WTC11 (cell line): ENCODE measurements at regions of chr10 and their contacts with region 1.

Region 1: GRCh38 chr10:95841661-95842498 is 65.9 kb upstream of the CC2D2B start:
- DNase-seq: peak; percentile 23
- ATAC-seq: peak; percentile 51; the same call in 1 of the 2 replicates
- H3K4me3 Mint-ChIP-seq: no peak overlapping the region
- H3K27ac Mint-ChIP-seq: no peak overlapping the region
- H3K4me1 Mint-ChIP-seq: peaks cover 8% of the 10 kb centered on the region
- H3K27me3 Mint-ChIP-seq: no peaks in the 10 kb centered on the region
- CTCF ChIP-seq: peak; percentile 68

Region 2: DNA sequence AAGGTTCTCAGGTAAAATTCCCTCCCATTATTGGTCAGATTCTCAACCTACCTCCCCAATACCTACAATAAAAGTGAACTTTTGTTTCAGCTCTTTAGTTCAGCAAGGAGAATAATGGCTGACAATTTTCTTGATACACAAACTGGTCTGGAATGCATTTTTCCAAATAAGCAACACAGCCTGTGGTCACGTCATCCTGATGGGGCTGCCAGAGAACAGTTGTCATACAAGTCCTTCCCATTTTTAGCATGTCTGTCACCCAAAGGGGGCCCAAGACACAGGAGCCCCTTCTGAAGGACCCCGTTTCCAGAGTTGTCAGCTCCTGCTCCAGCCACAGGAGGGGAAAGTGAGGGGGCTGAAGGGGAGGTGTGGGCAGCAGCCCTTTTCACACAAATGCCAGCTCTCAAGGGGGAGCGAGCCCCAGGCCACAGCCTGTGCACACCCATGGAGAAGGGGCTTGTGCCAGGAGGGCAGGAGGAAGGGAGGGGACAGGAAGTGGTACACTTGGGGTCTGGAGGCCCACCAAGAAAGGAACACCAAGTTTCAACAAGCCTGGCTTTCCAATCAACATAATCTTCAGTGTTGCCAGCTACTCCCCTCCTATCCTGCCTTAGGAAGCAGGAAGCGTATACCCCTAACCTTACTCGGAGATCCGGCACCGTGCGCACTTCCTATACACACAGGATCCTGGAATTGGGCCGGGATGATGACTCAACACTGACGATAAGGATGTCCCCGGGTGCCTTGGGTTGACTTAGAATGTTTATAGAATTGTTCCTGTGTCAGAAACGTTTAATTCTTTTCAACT is 507.7 kb before region 1 on chr10:
- CTCF ChIA-PET with region 1: no interaction called
- POLR2A ChIA-PET with region 1: no interaction called
- DNase-seq: no peak
- ATAC-seq: no peak
- H3K4me3 Mint-ChIP-seq: no peak overlapping the region
- H3K27ac Mint-ChIP-seq: no peak overlapping the region
- H3K4me1 Mint-ChIP-seq: peaks cover 20% of the 10 kb centered on the region
- H3K27me3 Mint-ChIP-seq: no peaks in the 10 kb centered on the region
- CTCF ChIP-seq: no peak

Region 3: DNA sequence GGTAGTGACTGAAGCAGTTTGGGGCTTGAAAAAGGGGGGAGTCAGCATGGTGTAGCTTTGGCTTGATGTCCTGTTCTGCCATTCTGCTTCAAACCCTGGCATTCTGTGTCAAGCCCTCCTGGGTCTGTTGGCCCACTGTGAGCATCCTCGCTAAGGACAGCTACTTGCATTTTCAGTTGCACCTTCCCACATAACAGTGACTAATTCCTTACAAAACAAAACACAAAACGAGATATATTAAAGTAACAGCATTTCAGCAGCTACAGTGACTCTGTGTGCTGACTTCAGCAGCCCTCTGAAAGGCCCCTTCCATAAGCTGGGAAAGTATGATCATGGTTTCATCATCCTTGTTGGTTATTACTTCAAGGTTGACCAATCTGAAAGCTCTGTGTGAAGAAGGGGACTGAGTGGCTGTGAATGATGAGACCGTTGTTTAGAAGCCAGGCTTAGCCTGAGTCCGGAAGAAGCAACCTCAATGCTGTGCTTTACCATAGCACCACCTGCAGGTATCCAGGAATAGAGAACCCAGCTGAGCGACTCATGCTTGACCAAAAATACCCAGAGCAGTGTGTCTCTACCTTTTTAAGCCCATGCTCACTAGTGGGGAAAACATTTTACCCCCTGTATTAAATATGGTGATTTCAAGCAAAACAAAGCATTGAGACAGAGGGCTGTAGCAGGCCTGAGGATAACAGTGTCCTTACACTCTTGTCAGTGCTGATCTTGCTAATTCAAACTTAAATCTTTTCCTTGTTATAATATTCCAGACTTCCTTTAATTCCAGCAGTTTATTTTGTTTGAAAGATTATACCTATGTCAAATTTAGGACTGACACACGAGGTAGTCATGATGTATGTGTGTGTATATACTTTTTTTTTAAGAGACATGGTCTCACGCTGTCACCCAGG is 23.3 kb after region 1 on chr10:
- CTCF ChIA-PET with region 1: interaction called, 16 read pairs
- POLR2A ChIA-PET with region 1: no interaction called
- DNase-seq: peak; percentile 36
- ATAC-seq: peak; percentile 99
- H3K4me3 Mint-ChIP-seq: no peak overlapping the region
- H3K27ac Mint-ChIP-seq: peak overlapping the region; percentile 9; the same call in 1 of the 2 replicates
- H3K4me1 Mint-ChIP-seq: no peaks in the 10 kb centered on the region
- H3K27me3 Mint-ChIP-seq: no peaks in the 10 kb centered on the region
- CTCF ChIP-seq: peak; percentile 32; the same call in 1 of the 2 replicates